Endothelial cell of umbilical vein (primary cell): ENCODE measurements at regions of chr12 and their contacts with region 1.

Region 1: DNA sequence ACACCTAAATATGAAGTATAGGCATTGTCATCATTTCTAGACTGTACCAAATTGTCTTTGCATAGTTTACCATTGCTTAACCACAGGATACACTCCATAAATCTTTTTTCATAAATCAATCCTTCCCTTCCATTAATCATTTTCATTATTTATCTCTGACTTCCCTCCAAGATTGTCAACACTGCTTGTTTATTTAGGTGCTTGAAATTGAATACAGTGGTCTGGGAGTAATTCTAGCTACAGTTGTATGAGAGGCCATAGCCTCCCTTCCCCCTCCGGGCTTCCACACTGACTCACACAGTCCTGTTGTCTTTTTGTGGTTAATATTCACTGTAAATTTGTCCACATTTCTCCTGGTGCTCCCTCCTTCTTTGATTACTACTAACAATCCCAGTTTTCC is 114.2 kb upstream of the ARID2 start:
- DNase-seq: peak; percentile 80
- H3K4me3 ChIP-seq: no peak overlapping the region
- H3K27ac ChIP-seq: no peak overlapping the region
- H3K4me1 ChIP-seq: peaks cover 31% of the 10 kb centered on the region
- H3K27me3 ChIP-seq: peaks cover 0 to 2% of the 10 kb centered on the region in 2 experiments
- CTCF ChIP-seq: no peak
- POLR2A ChIP-seq: peak; percentile 22

Region 2: GRCh38 chr12:45637706-45638105 is 22.4 kb after region 1 on chr12:
- CTCF ChIA-PET with region 1: interaction called, 3 read pairs
- POLR2A ChIA-PET with region 1: no interaction called
- dilution Hi-C with region 1: no loop called
- intact Hi-C with region 1: loop called (anchors 1 kb)
- DNase-seq: peak; percentile 74
- H3K4me3 ChIP-seq: no peak overlapping the region
- H3K27ac ChIP-seq: peak overlapping the region; percentile 50
- H3K4me1 ChIP-seq: peaks cover 17% of the 10 kb centered on the region
- H3K27me3 ChIP-seq: peaks cover 0 to 2% of the 10 kb centered on the region in 2 experiments
- CTCF ChIP-seq: no peak
- POLR2A ChIP-seq: no peak